Activated naive CD4-positive, alpha-beta T cell treated with anti-CD3 and anti-CD28 coated beads for 36 hours (primary cell): ENCODE measurements at regions of chr19 and their contacts with region 1.

Region 1: DNA sequence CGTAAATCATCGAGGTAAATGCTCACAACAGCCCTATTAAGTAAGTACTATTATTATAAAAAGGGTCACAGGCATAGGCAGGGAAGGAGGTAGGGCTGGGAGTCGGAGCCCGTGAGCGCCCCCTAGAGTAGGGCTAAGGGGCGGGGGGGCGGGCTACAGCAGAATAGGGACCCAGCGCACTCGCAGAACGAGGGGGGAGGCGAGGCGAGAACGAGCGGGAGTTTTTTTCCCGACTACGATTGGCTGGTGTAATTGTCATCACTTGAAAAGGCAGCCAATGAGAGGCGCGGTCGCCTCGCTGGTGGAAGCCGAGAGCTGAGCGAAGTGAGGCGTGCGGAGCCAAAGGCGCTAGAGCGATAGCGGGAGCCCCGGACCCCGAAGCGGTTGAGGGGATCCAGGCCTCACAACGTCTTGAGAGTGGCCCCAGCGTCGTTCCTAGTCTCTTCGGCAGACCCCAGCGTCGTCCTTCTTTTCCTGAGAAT is 24.2 kb downstream of the KEAP1 start:
- DNase-seq: peak; percentile 94
- H3K4me3 Mint-ChIP-seq: peak overlapping the region; percentile 45
- H3K27ac Mint-ChIP-seq: no peak overlapping the region
- H3K4me1 Mint-ChIP-seq: peaks cover 16% of the 10 kb centered on the region
- H3K27me3 Mint-ChIP-seq: no peaks in the 10 kb centered on the region

Region 2: DNA sequence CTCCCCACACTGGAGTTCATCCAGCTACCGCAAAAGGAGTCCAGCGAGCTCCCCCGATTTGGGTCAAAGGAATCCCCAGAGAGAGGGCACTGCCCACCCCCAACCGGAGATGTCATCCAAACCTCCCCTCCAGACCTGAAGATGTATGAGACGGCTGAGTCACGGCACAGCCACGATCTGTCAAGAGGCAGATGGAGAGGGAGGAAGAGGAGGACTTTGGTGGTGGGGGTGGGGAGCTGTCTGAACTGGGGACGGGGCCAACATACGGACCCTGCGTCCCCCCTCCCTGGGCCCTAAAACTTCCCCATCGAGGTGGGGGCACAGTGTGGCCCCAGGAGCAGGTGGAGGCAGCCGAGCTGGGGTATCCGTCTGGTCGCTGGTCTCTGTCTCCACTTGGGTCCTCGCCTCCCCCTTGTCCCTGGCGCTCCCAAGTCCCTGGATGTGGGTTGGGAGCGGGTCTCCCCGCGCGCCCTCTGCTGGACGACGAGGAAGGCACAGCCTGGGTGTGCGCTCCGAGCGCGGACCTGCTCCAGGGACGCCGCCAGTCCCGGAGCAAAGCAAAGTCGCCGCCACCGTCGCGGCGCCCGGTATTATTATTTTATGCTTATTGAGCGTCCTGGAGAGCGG is 54.8 kb before region 1 on chr19:
- CTCF ChIA-PET with region 1: no interaction called
- intact Hi-C with region 1: no loop called
- DNase-seq: peak; percentile 81
- H3K4me3 Mint-ChIP-seq: peak overlapping the region; percentile 67
- H3K27ac Mint-ChIP-seq: peak overlapping the region; percentile 91
- H3K4me1 Mint-ChIP-seq: peaks cover 70% of the 10 kb centered on the region
- H3K27me3 Mint-ChIP-seq: peaks cover 63% of the 10 kb centered on the region

Region 3: GRCh38 chr19:10450853-10451609 is 27.9 kb before region 1 on chr19:
- CTCF ChIA-PET with region 1: no interaction called
- intact Hi-C with region 1: no loop called
- DNase-seq: no peak
- H3K4me3 Mint-ChIP-seq: no peak overlapping the region
- H3K27ac Mint-ChIP-seq: no peak overlapping the region
- H3K4me1 Mint-ChIP-seq: no peaks in the 10 kb centered on the region
- H3K27me3 Mint-ChIP-seq: peaks cover 7% of the 10 kb centered on the region

Region 4: GRCh38 chr19:10461047-10461790 is 17.7 kb before region 1 on chr19:
- CTCF ChIA-PET with region 1: interaction called, 5 read pairs
- intact Hi-C with region 1: loop called (anchors 1 kb)
- DNase-seq: peak; percentile 96
- H3K4me3 Mint-ChIP-seq: peak overlapping the region; percentile 38
- H3K27ac Mint-ChIP-seq: no peak overlapping the region
- H3K4me1 Mint-ChIP-seq: peaks cover 9% of the 10 kb centered on the region
- H3K27me3 Mint-ChIP-seq: peaks cover 2% of the 10 kb centered on the region

Region 5: DNA sequence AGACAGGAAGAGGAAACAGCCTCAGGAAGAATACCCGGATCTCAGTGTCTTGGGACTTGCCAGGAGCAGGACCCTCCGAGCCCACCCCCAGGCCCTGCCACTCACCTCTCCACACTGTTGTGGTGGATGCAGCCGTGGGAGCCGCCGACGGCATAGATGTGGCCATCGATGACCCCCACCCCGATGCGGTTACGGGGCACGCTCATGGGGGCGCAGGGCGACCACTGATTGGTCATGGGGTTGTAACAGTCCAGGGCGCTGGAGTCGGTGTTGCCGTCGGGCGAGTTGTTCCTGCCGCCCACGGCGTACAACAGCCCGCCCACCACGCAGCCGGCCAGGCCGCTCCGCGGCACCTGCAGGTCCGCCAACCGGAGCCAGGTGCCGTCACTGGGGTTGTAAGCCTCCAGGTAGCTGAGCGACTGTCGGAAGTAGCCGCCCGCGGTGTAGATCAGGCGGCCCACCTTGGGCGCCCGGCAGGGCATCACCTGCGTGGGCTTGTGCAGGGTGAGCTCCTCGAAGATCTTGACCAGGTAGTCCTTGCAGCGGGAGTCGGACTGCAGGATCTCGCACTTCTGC is 12.6 kb after region 1 on chr19:
- CTCF ChIA-PET with region 1: interaction called, 10 read pairs
- intact Hi-C with region 1: no loop called
- DNase-seq: no peak
- H3K4me3 Mint-ChIP-seq: no peak overlapping the region
- H3K27ac Mint-ChIP-seq: no peak overlapping the region
- H3K4me1 Mint-ChIP-seq: peaks cover 2% of the 10 kb centered on the region
- H3K27me3 Mint-ChIP-seq: no peaks in the 10 kb centered on the region

Region 6: DNA sequence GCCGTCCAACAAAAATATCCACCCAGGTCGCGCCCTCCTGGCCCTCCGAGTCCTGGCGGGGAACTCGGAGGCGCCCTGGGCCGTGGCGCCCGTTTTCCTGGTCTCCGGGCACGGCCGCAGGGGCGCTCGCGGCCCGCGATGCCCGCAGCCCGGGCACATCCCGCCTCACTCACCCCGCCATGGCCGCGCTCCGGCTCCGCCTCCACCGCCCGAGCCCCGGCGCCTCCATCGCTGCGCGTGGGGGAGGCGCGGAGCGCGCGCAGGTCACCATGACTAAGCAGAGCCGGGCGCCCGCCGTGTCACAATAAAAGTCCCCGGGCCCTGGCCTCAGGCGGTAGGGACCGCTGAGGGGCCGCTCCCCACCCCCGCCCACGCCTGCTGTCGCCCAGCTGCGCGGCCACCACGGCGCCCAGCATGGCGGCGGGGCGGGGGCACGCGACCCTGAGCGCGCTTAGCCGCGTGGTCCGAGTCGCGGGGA is 23.6 kb after region 1 on chr19:
- CTCF ChIA-PET with region 1: no interaction called
- intact Hi-C with region 1: loop called (anchors 2 kb)
- DNase-seq: peak; percentile 93
- H3K4me3 Mint-ChIP-seq: peak overlapping the region; percentile 89
- H3K27ac Mint-ChIP-seq: peak overlapping the region; percentile 88
- H3K4me1 Mint-ChIP-seq: peaks cover 37% of the 10 kb centered on the region
- H3K27me3 Mint-ChIP-seq: no peaks in the 10 kb centered on the region

Region 7: GRCh38 chr19:10543420-10544241 is 64.7 kb after region 1 on chr19 and contains the start of gene ATG4D:
- CTCF ChIA-PET with region 1: no interaction called
- intact Hi-C with region 1: loop called (anchors 2 kb)
- DNase-seq: peak; percentile 78
- H3K4me3 Mint-ChIP-seq: peak within 1 kb of the TSS; percentile 85
- H3K27ac Mint-ChIP-seq: peak within 1 kb of the TSS; percentile 84
- H3K4me1 Mint-ChIP-seq: peaks cover 16% of the 10 kb centered on the region
- H3K27me3 Mint-ChIP-seq: peaks cover 5% of the 10 kb centered on the region
- total RNA-seq, gene ATG4D: 21.6 to 22.5 TPM

Region 8: DNA sequence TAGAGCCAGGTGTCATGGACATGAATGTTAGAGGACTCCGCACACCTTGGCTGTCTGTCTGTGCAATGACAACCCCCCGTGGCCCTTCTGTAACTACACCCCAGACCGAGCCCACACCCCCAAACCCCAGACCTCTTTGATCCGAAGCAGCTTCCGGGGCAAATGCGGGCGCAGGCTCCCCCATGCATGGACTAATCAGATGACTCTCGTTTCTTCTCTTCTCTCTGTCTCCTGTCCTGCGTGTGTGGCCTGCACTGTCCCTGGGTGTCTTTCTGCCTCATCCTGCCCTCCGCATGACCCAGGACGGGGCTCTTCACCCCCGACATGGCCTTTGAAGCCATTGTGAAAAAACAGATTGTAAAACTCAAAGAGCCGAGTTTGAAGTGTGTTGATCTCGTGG is 318.1 kb after region 1 on chr19:
- CTCF ChIA-PET with region 1: no interaction called
- intact Hi-C with region 1: no loop called
- DNase-seq: no peak
- H3K4me3 Mint-ChIP-seq: peak overlapping the region; percentile 70
- H3K27ac Mint-ChIP-seq: peak overlapping the region; percentile 96
- H3K4me1 Mint-ChIP-seq: peaks cover 28% of the 10 kb centered on the region
- H3K27me3 Mint-ChIP-seq: no peaks in the 10 kb centered on the region